ENCODE measurements at regions of chr2 and their contacts with region 1.

Region 1: GRCh38 chr2:218395797-218396687 is 3.6 kb upstream of the CTDSP1 start:
- DNase-seq: peak; percentile 99
- H3K4me3 ChIP-seq: peak overlapping the region; percentile 40 to 99 (median 96)
- H3K27ac ChIP-seq: peak overlapping the region; percentile 90 to 100 (median 99)
- H3K4me1 ChIP-seq: peaks cover 6 to 83% (median 58%) of the 10 kb centered on the region in 6 donors
- H3K27me3 ChIP-seq: no peaks in the 10 kb centered on the region
- CTCF ChIP-seq: peak; percentile 97 to 100 (median 98)
- POLR2A ChIP-seq: peak in 1 of 3 donors; percentile 35

Region 2: GRCh38 chr2:218292048-218293014 is 103.7 kb before region 1 on chr2 and contains the start of gene TMBIM1:
- intact Hi-C with region 1: loop called (anchors 10 kb)
- DNase-seq: peak; percentile 96
- H3K4me3 ChIP-seq: peak within 1 kb of the TSS; percentile 48 to 92 (median 70)
- H3K27ac ChIP-seq: peak within 1 kb of the TSS; percentile 92 to 98 (median 96)
- H3K4me1 ChIP-seq: peaks cover 46 to 78% (median 64%) of the 10 kb centered on the region in 6 donors
- H3K27me3 ChIP-seq: no peaks in the 10 kb centered on the region
- CTCF ChIP-seq: peak; percentile 17 to 100 (median 97)
- POLR2A ChIP-seq: peak in 1 of 3 donors; percentile 9
- total RNA-seq, gene TMBIM1: 79.4 to 121 (median 95.9) TPM